Uterus (tissue), 4 donors: ENCODE measurements at regions of chr19 and their contacts with region 1.

Region 1: GRCh38 chr19:17075035-17075863 is at the starts of genes HAUS8 and MYO9B:
- DNase-seq: peak; percentile 99 to 100
- H3K4me3 ChIP-seq: peak within 1 kb of the TSS; percentile 77 to 84
- H3K27ac ChIP-seq: peak within 1 kb of the TSS; percentile 91 to 92
- H3K4me1 ChIP-seq: peaks cover 5 to 22% of the 10 kb centered on the region in 2 donors
- H3K27me3 ChIP-seq: no peaks in the 10 kb centered on the region
- CTCF ChIP-seq: peak in 1 of 4 experiments; percentile 43
- POLR2A ChIP-seq: peak; percentile 69 to 89
- total RNA-seq, gene HAUS8: 2.6 to 11.5 (median 6.9) TPM
- total RNA-seq, gene MYO9B: 17.6 to 117 (median 54.1) TPM

Region 2: DNA sequence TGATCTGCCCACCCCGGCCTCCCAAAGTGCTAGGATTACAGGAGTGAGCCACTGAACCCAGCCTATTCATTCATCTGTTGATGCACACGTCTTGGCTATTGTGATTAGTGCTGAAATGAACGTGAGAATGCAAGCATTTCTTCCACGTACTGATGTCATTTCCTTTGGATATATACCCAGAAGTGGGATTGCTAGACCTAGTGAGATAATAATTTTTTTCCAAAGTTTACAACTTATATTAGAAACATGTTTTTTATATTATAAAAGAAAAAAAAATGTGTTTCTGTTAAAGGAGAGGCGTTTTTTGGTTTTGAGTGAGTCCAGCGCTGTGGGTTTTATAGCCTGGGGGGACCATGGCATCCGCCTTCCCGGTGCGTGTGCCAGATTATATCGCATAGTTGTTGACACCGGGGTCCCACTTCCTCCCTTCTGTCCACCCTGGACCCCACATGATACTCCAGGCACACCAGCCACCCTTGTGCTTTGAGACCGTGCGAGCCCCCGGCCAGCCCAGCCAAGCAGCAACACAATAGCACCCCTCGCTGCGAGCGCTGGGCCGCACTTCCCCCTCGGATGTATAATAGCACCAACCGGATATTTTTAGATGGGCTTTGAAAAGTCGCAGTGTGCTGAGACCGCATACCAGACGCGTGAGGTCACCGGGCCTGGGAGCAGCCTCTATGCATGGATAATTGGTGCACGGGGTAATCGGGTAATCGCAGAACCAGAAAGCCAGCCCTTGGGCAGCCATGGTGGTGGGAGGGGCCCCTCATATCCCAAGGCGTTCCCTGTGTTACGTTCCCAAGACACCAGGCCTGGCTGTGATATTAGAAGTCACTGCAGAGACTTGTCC is 60.0 kb after region 1 on chr19:
- intact Hi-C with region 1: loop called (anchors 10 kb)
- DNase-seq: peak; percentile 93 to 95
- H3K4me3 ChIP-seq: peak overlapping the region in 1 of 2 donors; percentile 21
- H3K27ac ChIP-seq: peak overlapping the region; percentile 89 to 95
- H3K4me1 ChIP-seq: peaks cover 8 to 10% of the 10 kb centered on the region in 2 donors
- H3K27me3 ChIP-seq: no peaks in the 10 kb centered on the region
- CTCF ChIP-seq: peak; percentile 42 to 56 (median 52)
- POLR2A ChIP-seq: peak; percentile 42 to 56

Region 3: DNA sequence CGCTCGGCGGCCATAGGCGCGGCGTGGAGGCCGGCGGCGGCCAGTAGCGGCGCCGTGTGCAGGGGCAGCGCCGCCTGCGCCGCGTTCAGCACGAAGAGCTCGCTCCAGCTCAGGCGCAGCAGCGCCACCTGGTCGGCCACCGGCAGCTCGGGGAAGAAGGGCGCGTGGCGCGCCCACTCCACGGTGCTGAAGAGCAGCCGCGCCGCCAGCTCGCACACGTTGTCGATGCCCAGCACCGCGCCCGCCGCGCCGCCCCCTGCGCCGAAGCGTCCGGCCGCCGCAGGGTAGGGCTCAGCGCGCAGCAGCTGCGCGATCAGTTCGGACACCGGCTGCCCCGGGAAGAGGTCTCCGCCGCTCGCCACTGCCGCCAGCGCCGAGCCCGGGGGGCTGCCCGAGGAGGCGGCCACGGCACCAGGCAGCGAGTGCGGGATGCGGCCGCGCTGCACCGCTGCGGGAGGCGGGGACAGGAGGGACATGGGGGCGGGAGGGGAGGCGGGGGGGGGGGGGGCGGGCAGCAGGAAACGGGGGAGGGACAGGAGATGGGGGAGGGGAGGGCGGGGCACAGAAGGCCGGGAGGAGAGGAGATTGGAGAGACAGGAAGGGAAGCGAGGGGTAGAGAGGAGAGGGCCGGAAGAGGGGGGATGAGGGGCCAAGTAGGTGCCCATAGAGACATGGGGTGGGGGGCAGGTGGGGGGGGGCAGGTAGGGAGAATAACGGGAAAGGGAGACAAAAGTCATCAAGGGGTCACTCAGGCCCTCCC is 160.5 kb after region 1 on chr19:
- intact Hi-C with region 1: no loop called
- DNase-seq: peak; percentile 62 to 72
- H3K4me3 ChIP-seq: peak overlapping the region; percentile 6 to 44
- H3K27ac ChIP-seq: peak overlapping the region; percentile 51 to 81
- H3K4me1 ChIP-seq: peaks cover 5 to 13% of the 10 kb centered on the region in 2 donors
- H3K27me3 ChIP-seq: no peaks in the 10 kb centered on the region
- CTCF ChIP-seq: peak; percentile 49 to 80 (median 75)
- POLR2A ChIP-seq: peak in 1 of 2 donors; percentile 13

Region 4: GRCh38 chr19:17275461-17276175 is 200.4 kb after region 1 on chr19:
- intact Hi-C with region 1: loop called (anchors 10 kb)
- DNase-seq: no peak
- H3K4me3 ChIP-seq: no peak overlapping the region
- H3K27ac ChIP-seq: no peak overlapping the region
- H3K4me1 ChIP-seq: no peaks in the 10 kb centered on the region
- H3K27me3 ChIP-seq: no peaks in the 10 kb centered on the region
- CTCF ChIP-seq: no peak
- POLR2A ChIP-seq: no peak